Ascending aorta (tissue), 2 donors: ENCODE measurements at regions of chr1 and their contacts with region 1.

Region 1: DNA sequence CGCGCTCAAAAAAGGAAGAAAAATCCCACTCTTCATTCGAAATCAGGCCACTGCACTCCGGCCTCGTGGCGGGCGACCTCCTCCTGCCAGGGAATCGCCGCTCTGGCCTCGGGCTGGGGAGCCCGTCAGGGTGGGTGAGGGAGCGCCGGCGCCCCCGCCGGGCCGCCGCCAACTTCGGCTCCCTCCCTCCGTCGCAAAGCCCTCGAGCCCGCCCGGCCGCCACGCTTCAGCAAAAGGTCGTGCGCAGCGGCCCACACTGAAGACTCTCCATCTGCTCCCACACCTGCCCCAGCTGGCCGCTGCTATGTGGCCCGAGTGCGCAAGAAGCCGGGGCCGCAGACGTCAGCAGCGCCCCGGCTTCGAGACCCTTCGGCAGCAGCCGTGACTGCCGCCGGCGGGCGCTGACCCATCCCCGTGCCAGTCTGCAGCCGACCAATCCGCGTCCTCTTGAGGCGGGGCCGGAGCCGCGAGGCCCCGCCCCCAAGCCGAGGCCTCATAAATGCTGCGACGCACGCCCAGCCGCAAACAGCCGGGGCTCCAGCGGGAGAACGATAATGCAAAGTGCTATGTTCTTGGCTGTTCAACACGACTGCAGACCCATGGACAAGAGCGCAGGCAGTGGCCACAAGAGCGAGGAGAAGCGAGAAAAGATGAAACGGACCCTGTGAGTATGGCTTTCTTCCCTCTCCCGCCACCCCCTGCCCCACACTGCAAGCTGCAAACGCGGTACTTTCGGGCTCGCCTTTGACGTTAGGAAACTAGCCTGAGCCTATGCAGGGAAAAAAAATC is at the start of gene RGS2:
- DNase-seq: peak; percentile 72 to 95
- H3K4me3 ChIP-seq: peak within 1 kb of the TSS; percentile 73 to 84
- H3K27ac ChIP-seq: peak within 1 kb of the TSS; percentile 86 to 90
- H3K4me1 ChIP-seq: no peaks in the 10 kb centered on the region
- H3K27me3 ChIP-seq: no peaks in the 10 kb centered on the region
- CTCF ChIP-seq: peak in 1 of 3 experiments; percentile 41
- total RNA-seq, gene RGS2: 11.9 TPM

Region 2: DNA sequence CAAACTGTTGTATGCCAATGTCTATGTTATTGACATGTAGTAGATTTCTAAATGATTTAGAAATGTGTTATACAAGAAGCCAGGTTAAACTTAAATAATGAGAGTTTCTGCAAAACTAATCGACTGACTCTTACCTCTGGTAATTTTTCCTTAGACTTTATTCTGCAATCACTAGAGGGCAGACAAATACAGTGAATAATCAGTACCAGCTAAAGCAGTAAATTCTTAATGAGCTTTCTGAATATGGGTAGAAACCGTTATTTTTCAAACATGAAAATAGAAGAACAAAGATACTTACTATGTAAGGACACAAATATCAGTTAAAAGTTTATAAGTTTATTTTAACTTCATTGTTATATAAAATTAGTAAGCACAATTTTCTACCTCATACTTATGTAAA is 331.1 kb before region 1 on chr1:
- intact Hi-C with region 1: loop called (anchors 2 kb)
- DNase-seq: no peak
- H3K4me3 ChIP-seq: no peak overlapping the region
- H3K27ac ChIP-seq: no peak overlapping the region
- H3K4me1 ChIP-seq: no peaks in the 10 kb centered on the region
- H3K27me3 ChIP-seq: no peaks in the 10 kb centered on the region
- CTCF ChIP-seq: peak; percentile 40 to 71 (median 64)

Region 3: GRCh38 chr1:192904438-192904895 is 95.8 kb after region 1 on chr1:
- intact Hi-C with region 1: loop called (anchors 2 kb)
- DNase-seq: peak in 1 of 2 donors; percentile 79
- H3K4me3 ChIP-seq: peak overlapping the region in 1 of 2 donors; percentile 31
- H3K27ac ChIP-seq: peak overlapping the region; percentile 13 to 60
- H3K4me1 ChIP-seq: peaks cover 0 to 11% of the 10 kb centered on the region in 2 donors
- H3K27me3 ChIP-seq: no peaks in the 10 kb centered on the region
- CTCF ChIP-seq: no peak

Region 4: DNA sequence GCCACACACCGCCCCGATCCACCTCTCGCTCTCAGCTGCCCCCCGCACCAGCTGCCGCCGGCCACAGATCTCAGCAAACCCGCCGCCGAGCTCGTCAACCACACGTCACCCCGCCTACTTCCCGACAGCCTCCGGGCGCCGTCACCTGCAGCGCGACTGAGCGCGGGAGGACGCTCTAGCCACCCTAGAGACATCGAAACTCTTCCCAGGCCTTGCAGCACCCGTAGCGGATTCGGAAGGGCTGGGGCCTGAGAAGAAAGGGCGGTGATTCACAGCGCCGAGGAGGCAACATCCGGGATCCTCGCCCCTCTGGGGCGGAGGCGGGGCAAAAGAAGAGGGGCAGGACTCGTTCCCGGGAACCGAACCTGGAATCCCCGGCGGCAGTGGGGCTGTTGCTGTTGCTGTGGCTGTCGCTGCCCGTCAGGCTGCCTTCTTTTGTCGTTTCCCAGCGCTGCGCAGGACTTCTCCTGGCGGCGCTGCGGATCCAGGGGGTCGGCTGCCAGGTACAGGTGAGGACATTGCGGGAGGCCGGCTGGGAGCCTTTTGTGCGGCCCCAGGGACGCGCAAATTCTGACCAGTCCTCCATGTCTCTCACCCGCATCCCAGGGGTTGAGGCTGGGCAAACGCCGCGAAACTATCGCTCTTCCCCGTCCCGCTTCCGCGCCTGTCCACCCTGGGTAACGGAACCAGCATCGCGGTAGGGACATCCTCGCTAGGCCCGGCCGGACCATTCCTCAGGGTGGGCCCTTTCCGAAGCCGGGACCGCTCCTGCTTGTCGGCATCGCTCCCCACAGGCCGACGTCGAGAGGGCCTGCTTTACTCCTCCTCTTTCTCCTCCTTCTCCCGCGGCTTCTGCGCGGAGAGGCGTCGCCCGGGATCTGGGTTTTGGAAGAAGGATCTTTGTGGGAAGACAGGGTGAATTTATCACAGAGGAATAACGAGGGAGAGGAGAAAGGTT is 250.8 kb after region 1 on chr1 and contains the starts of genes RO60 and UCHL5:
- intact Hi-C with region 1: loop called (anchors 2 kb)
- DNase-seq: peak; percentile 95 to 98
- H3K4me3 ChIP-seq: peak within 1 kb of the TSS; percentile 77 to 83
- H3K27ac ChIP-seq: peak within 1 kb of the TSS; percentile 96
- H3K4me1 ChIP-seq: peaks cover 3 to 26% of the 10 kb centered on the region in 2 donors
- H3K27me3 ChIP-seq: no peaks in the 10 kb centered on the region
- CTCF ChIP-seq: no peak
- total RNA-seq, gene RO60: 56.2 TPM
- total RNA-seq, gene UCHL5: 4.2 TPM

Region 5: GRCh38 chr1:193121616-193122593 is 313.2 kb after region 1 on chr1 and contains the start of gene CDC73:
- intact Hi-C with region 1: loop called (anchors 5 kb)
- DNase-seq: peak; percentile 91 to 99
- H3K4me3 ChIP-seq: peak within 1 kb of the TSS; percentile 70 to 78
- H3K27ac ChIP-seq: peak within 1 kb of the TSS; percentile 95
- H3K4me1 ChIP-seq: peaks cover 5 to 15% of the 10 kb centered on the region in 2 donors
- H3K27me3 ChIP-seq: no peaks in the 10 kb centered on the region
- CTCF ChIP-seq: peak; percentile 89 to 99 (median 93)
- total RNA-seq, gene CDC73: 26.5 TPM